Naive thymus-derived CD8-positive, alpha-beta T cell (primary cell): ENCODE measurements at regions of chr3 and their contacts with region 1.

Region 1: GRCh38 chr3:152241142-152242017 is 27.3 kb upstream of the MBNL1 start:
- DNase-seq: no peak
- ATAC-seq: peak in 1 of 2 donors; percentile 37
- H3K4me3 Mint-ChIP-seq: peak overlapping the region; percentile 40 to 97 (median 94)
- H3K27ac Mint-ChIP-seq: peak overlapping the region; percentile 82 to 96 (median 93)
- H3K4me1 Mint-ChIP-seq: peaks cover 20 to 70% (median 61%) of the 10 kb centered on the region in 4 donors
- H3K27me3 Mint-ChIP-seq: no peaks in the 10 kb centered on the region

Region 2: DNA sequence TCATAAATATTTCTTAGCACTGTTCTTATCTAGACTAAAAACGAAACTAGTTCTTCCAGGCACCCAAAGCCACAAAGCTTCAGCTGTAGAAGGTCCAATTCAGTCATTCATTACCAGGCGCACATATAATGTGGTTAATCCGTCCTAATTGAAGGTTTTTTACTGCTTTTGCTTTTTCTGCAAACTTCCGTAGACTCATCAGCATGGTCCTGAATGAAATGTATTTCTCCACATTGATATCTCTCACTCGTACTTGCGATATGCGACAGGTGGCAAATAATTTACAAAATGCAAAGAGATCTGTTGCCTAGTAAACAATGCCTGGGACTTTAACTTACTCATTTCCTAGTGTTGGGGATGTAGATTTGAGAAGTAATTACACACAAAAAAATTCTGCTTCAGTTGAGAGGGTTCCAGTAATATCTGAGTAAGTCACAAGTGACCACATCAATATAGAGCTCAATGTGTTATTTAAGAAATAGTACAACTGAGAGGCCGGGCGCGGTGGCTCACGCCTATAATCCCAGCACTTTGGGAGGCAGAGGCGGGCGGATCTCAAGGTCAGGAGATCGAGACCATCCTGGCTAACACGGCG is 47.6 kb before region 1 on chr3:
- POLR2A ChIA-PET with region 1: interaction called, 37 read pairs
- DNase-seq: peak in 6 of 10 donors; percentile 10 to 57 (median 32)
- ATAC-seq: peak; percentile 61 to 65
- H3K4me3 Mint-ChIP-seq: peak overlapping the region; percentile 69 to 90 (median 85)
- H3K27ac Mint-ChIP-seq: peak overlapping the region; percentile 85 to 99 (median 93)
- H3K4me1 Mint-ChIP-seq: peaks cover 31 to 85% (median 75%) of the 10 kb centered on the region in 4 donors
- H3K27me3 Mint-ChIP-seq: no peaks in the 10 kb centered on the region

Region 3: GRCh38 chr3:152205097-152205593 is 36.2 kb before region 1 on chr3:
- POLR2A ChIA-PET with region 1: interaction called, 37 read pairs
- DNase-seq: peak in 2 of 10 donors; percentile 42 to 44
- ATAC-seq: peak; percentile 62 to 66
- H3K4me3 Mint-ChIP-seq: peak overlapping the region; percentile 55 to 96 (median 90)
- H3K27ac Mint-ChIP-seq: peak overlapping the region; percentile 40 to 99 (median 94)
- H3K4me1 Mint-ChIP-seq: peaks cover 25 to 86% (median 66%) of the 10 kb centered on the region in 4 donors
- H3K27me3 Mint-ChIP-seq: no peaks in the 10 kb centered on the region

Region 4: GRCh38 chr3:152219216-152219615 is 22.2 kb before region 1 on chr3:
- POLR2A ChIA-PET with region 1: interaction called, 22 read pairs
- DNase-seq: no peak
- ATAC-seq: no peak
- H3K4me3 Mint-ChIP-seq: peak overlapping the region; percentile 34 to 89 (median 82)
- H3K27ac Mint-ChIP-seq: peak overlapping the region; percentile 57 to 97 (median 90)
- H3K4me1 Mint-ChIP-seq: peaks cover 28 to 68% (median 59%) of the 10 kb centered on the region in 4 donors
- H3K27me3 Mint-ChIP-seq: no peaks in the 10 kb centered on the region

Region 5: GRCh38 chr3:152258448-152259393 is 17.3 kb after region 1 on chr3:
- POLR2A ChIA-PET with region 1: interaction called, 123 read pairs
- DNase-seq: peak in 9 of 10 donors; percentile 29 to 86 (median 59)
- ATAC-seq: peak; percentile 68 to 74
- H3K4me3 Mint-ChIP-seq: peak overlapping the region; percentile 60 to 88 (median 82)
- H3K27ac Mint-ChIP-seq: peak overlapping the region; percentile 93 to 99 (median 96)
- H3K4me1 Mint-ChIP-seq: peaks cover 33 to 88% (median 84%) of the 10 kb centered on the region in 4 donors
- H3K27me3 Mint-ChIP-seq: no peaks in the 10 kb centered on the region